Right cardiac atrium (tissue), 5 donors: ENCODE measurements at regions of chr2 and their contacts with region 1.

Region 1: GRCh38 chr2:48589170-48589767 is 28.4 kb upstream of the GTF2A1L start:
- DNase-seq: peak in 1 of 3 donors; percentile 65
- ATAC-seq: no peak
- H3K4me3 ChIP-seq: no peak overlapping the region
- H3K27ac ChIP-seq: no peak overlapping the region
- H3K4me1 ChIP-seq: no peaks in the 10 kb centered on the region
- H3K27me3 ChIP-seq: no peaks in the 10 kb centered on the region

Region 2: GRCh38 chr2:48471048-48471474 is 118.2 kb before region 1 on chr2:
- intact Hi-C with region 1: loop called in 1 of 4 experiments (anchors 10 kb)
- DNase-seq: no peak
- ATAC-seq: peak; percentile 81 to 84
- H3K4me3 ChIP-seq: no peak overlapping the region
- H3K27ac ChIP-seq: no peak overlapping the region
- H3K4me1 ChIP-seq: no peaks in the 10 kb centered on the region
- H3K27me3 ChIP-seq: no peaks in the 10 kb centered on the region

Region 3: DNA sequence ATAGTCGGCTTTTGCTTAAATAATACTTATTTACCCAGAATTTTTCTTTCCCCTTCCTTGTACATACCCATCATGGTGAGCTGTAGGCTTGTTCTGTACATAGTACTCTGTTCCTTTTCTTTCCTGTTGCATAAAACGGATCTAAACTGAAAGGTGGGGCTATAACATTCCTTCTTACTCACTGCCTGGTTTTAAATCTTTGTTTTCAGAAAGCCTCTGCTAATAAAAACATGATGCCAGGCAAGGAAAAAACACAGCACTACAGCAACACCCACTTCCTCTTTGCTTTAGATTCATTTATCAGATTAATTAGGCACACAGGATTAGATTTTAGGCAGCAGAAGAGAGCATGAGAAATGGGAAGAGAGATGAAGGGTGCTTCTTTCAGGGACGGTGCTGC is 78.9 kb before region 1 on chr2:
- intact Hi-C with region 1: loop called in 1 of 4 experiments (anchors 10 kb)
- DNase-seq: no peak
- ATAC-seq: no peak
- H3K4me3 ChIP-seq: no peak overlapping the region
- H3K27ac ChIP-seq: no peak overlapping the region
- H3K4me1 ChIP-seq: peaks cover 3% of the 10 kb centered on the region
- H3K27me3 ChIP-seq: no peaks in the 10 kb centered on the region

Region 4: DNA sequence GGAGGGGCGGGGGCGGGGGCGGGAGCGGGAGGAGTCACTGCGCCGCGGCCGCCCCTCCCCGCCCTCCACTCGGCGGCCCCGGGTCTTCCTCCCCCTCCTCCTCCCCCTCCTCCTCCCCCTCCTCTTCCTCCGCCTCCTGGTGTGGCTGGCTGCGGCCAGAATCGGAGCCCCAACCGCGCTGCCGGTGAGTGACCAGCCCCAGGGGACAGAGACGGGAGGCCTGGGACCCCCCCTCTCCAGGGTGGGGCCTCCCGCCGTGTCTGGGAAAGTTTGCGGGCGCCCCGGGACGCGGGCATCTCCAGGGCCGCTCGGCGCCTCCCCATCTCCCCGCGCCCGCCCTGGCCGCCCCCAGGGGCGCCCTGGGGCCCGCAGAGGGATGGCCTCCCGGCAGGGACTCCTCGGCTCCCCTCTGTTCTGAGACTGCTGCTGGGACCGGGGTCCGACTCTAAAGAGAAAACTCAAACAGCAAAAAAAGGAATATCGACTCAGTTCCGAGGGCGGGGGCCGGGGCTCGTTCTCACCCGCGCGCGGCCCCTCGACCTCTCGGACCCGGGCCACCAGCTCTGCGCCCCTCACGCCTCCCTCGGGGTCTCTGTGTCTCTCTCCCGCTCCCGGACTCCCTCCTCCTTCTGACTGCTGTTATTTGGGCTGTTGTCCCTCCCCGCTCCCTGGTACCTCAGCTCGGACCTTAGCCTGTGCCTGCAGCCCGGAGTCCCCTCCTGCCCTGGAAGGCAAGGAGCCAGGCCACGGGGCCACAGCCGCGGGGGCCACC is 59.0 kb before region 1 on chr2 and contains the start of gene STON1:
- intact Hi-C with region 1: loop called in 1 of 4 experiments (anchors 10 kb)
- DNase-seq: peak; percentile 65 to 87 (median 86)
- ATAC-seq: peak; percentile 79 to 81
- H3K4me3 ChIP-seq: peak within 1 kb of the TSS; percentile 86
- H3K27ac ChIP-seq: peak within 1 kb of the TSS; percentile 74
- H3K4me1 ChIP-seq: peaks cover 14% of the 10 kb centered on the region
- H3K27me3 ChIP-seq: no peaks in the 10 kb centered on the region
- total RNA-seq, gene STON1: 8.8 to 18.0 (median 13.1) TPM